ENCODE measurements at regions of chr4 and their contacts with region 1.

Region 1: GRCh38 chr4:16026160-16026761 is 57.6 kb downstream of the PROM1 start:
- DNase-seq: peak; percentile 30
- ATAC-seq: no peak
- H3K4me3 Mint-ChIP-seq: no peak overlapping the region
- H3K27ac Mint-ChIP-seq: no peak overlapping the region
- H3K4me1 Mint-ChIP-seq: no peaks in the 10 kb centered on the region
- H3K27me3 Mint-ChIP-seq: peaks cover 13% of the 10 kb centered on the region
- CTCF ChIP-seq: peak; percentile 82

Region 2: DNA sequence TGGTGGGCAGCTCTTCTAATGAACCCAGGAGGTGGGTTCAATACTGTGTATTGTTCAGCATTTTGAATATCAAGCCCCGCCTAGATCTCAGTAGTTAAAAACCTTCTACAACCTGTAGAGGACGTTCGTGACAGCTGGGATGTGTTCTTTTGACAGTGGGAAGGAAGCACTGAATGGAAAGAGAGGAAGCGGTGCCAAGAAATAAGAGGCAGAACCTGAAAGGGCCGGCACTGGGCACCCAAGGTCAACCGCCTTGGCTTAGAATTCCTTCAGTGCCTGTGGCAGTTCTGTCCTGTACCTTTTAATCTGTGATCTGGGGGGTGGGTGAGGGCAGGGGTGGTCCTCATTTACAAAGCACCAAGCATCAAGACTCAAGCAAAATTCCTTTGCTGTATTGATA is 483.5 kb before region 1 on chr4:
- CTCF ChIA-PET with region 1: no interaction called
- POLR2A ChIA-PET with region 1: no interaction called
- intact Hi-C with region 1: no loop called
- DNase-seq: no peak
- ATAC-seq: no peak
- H3K4me3 Mint-ChIP-seq: no peak overlapping the region
- H3K27ac Mint-ChIP-seq: no peak overlapping the region
- H3K4me1 Mint-ChIP-seq: peaks cover 3% of the 10 kb centered on the region
- H3K27me3 Mint-ChIP-seq: no peaks in the 10 kb centered on the region
- CTCF ChIP-seq: no peak

Region 3: DNA sequence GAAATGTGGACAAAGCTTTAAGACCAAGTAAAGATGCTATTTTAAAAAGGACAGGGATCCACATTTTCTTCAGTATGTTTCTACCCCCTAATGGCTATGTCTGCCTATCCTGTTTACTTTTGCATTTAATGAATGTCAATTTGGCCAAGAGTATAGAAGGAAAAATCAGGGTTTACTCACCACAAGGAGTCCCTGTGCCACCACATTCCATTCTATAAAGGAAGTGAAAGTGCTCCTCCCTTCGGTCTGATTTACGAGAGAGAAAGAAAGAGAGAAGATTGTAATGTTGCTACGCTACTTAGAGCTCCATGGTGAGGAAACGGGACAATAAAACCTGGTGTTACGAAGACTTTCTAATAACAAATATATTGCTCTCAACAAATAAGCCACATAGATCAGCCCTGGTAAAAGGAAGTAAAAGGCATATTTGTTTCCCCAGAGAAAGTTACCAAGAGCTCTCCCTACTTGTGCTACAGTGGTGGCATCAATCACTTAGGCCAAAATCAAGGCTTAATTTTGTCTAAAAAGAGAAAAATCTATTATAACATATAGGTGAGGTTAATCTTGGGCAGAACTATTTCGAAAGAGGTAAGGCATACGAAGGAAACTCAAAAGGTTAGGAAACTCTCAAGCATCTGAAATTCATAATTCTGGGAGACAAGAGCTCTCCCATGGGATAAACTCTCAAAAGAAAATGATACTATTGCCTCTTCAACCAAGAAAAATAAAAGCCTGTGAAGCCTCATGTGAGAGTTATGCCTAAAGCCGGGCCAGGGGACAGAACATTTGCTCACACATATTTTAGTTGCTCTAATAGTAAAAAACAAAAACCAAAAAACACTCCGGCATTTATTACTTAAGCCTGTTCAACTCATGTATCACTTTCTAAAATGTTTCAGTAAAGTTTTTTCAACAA is 170.5 kb after region 1 on chr4:
- CTCF ChIA-PET with region 1: interaction called, 4 read pairs
- POLR2A ChIA-PET with region 1: no interaction called
- intact Hi-C with region 1: loop called (anchors 5 kb)
- DNase-seq: no peak
- ATAC-seq: no peak
- H3K4me3 Mint-ChIP-seq: no peak overlapping the region
- H3K27ac Mint-ChIP-seq: peak overlapping the region; percentile 18
- H3K4me1 Mint-ChIP-seq: peaks cover 22% of the 10 kb centered on the region
- H3K27me3 Mint-ChIP-seq: no peaks in the 10 kb centered on the region
- CTCF ChIP-seq: no peak

Region 4: DNA sequence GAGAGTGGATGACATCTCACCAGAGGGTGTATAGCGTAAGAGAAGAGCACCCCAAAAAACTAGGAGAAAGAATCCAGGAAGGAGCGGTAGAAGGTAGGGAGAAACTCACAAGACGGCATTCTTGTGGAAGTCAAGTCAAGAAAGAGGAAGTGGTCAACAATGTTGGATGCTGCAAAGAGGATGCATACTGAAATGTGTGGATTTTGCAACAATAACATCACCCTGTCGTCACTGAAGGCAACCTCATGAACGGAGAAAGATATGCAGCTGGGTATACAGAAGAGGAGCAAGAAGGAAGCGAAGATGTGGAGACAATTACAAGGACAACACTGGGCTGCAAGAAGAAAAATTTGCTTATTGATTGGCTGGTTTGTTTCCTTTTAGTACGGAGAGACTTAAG is 211.5 kb after region 1 on chr4:
- CTCF ChIA-PET with region 1: no interaction called
- POLR2A ChIA-PET with region 1: no interaction called
- intact Hi-C with region 1: no loop called
- DNase-seq: no peak
- ATAC-seq: no peak
- H3K4me3 Mint-ChIP-seq: no peak overlapping the region
- H3K27ac Mint-ChIP-seq: no peak overlapping the region
- H3K4me1 Mint-ChIP-seq: no peaks in the 10 kb centered on the region
- H3K27me3 Mint-ChIP-seq: no peaks in the 10 kb centered on the region
- CTCF ChIP-seq: no peak

Measured in activated CD8-positive, alpha-beta T cell treated with anti-CD3 and anti-CD28 coated beads for 36 hours (primary cell).